ENCODE measurements at regions of chr6 and their contacts with region 1.

Region 1: GRCh38 chr6:151370509-151371078 is 20.8 kb downstream of the ZBTB2 start:
- DNase-seq: peak; percentile 55
- H3K4me3 ChIP-seq: no peak overlapping the region
- H3K27ac ChIP-seq: no peak overlapping the region
- H3K27me3 ChIP-seq: no peaks in the 10 kb centered on the region
- CTCF ChIP-seq: peak; percentile 48

Region 2: GRCh38 chr6:150891888-150892485 is 478.6 kb before region 1 on chr6:
- in situ Hi-C with region 1: loop called (anchors 25 kb)
- DNase-seq: peak; percentile 86
- H3K4me3 ChIP-seq: no peak overlapping the region
- H3K27ac ChIP-seq: peak overlapping the region; percentile 49
- H3K27me3 ChIP-seq: no peaks in the 10 kb centered on the region
- CTCF ChIP-seq: peak; percentile 88

Region 3: GRCh38 chr6:151585741-151586140 is 215.1 kb after region 1 on chr6:
- in situ Hi-C with region 1: no loop called
- DNase-seq: no peak
- H3K4me3 ChIP-seq: no peak overlapping the region
- H3K27ac ChIP-seq: no peak overlapping the region
- H3K27me3 ChIP-seq: no peaks in the 10 kb centered on the region
- CTCF ChIP-seq: no peak